CD8-positive, alpha-beta T cell (primary cell): ENCODE measurements at regions of chr7 and their contacts with region 1.

Region 1: GRCh38 chr7:8217200-8218068 is 44.5 kb downstream of the ICA1 start:
- DNase-seq: peak in 3 of 9 experiments; percentile 55 to 81 (median 74)
- ATAC-seq: peak; percentile 58
- H3K4me3 ChIP-seq: no peak overlapping the region
- H3K4me3 Mint-ChIP-seq: no peak overlapping the region
- H3K27ac ChIP-seq: no peak overlapping the region
- H3K27ac Mint-ChIP-seq: no peak overlapping the region
- H3K4me1 ChIP-seq: no peaks in the 10 kb centered on the region
- H3K4me1 Mint-ChIP-seq: peaks cover 3% of the 10 kb centered on the region
- H3K27me3 ChIP-seq: no peaks in the 10 kb centered on the region
- H3K27me3 Mint-ChIP-seq: no peaks in the 10 kb centered on the region
- CTCF ChIP-seq: peak; percentile 79

Region 2: DNA sequence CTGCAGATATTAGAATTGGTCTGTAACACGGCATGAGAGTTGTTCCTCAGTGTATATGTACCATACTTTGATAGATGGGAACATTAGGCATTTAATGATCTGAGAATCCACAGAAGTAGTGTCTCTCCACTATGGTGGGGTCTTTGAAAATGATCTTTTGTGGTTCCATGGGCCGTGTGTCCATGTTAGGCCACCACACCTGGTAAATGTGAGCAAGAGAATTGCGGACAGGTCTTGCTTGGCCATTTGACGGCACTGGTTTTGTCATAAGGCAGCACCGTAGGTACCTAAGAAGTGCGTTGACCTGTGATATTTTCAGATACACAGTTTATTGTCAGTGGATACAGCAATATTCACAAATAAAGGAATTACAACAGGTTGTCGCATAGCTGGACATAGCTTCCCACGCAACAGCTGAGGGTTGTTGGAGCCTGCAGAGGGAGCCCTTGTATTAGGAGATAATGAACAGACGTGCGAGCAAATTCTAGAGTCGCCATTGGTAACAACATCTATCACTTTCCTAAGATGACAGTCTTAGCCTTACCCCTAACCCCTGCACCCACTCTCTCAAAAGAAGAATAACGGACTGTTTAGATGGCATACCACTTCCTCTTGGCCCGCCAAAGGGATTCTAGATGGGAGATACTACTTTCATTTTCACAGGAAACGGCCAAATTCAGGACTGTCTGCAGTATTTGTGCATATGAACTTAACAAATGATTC is 793.1 kb before region 1 on chr7:
- CTCF ChIA-PET with region 1: interaction called, 3 read pairs
- POLR2A ChIA-PET with region 1: no interaction called
- intact Hi-C with region 1: loop called in 1 of 2 experiments (anchors 2 kb)
- DNase-seq: peak; percentile 8 to 67 (median 36)
- ATAC-seq: no peak
- H3K4me3 ChIP-seq: peak overlapping the region; percentile 53 to 71
- H3K4me3 Mint-ChIP-seq: peak overlapping the region; percentile 85
- H3K27ac ChIP-seq: no peak overlapping the region
- H3K27ac Mint-ChIP-seq: peak overlapping the region; percentile 71
- H3K4me1 ChIP-seq: no peaks in the 10 kb centered on the region
- H3K4me1 Mint-ChIP-seq: peaks cover 8% of the 10 kb centered on the region
- H3K27me3 ChIP-seq: no peaks in the 10 kb centered on the region
- H3K27me3 Mint-ChIP-seq: no peaks in the 10 kb centered on the region
- CTCF ChIP-seq: peak; percentile 40

Region 3: DNA sequence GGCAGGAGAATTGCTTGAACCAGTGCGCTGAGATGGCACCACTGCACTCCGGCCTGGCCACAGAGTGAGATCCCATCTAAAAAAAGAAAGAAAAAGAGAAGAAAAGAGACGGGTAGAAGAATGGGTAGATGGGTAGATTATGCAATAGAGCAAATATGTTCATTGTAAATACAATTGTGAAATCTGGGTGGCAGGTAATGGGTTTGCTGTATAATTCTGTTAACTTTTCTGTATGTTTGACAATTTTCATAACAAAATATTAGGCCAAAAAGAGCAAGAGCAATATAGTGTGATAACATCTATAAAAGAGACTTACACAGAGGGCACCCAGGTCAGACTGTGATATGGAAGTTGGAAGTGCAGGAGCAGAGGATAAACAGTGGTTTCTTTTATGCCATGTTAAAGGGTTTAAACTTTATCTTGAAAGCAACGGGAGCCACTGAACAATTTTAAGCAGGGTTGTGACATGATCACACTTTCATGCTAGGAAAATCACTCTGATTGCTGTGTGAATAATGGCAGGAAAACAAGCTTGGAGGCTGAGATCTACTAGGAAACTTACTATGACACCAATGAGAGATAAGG is 675.1 kb before region 1 on chr7:
- CTCF ChIA-PET with region 1: interaction called, 3 read pairs
- POLR2A ChIA-PET with region 1: no interaction called
- intact Hi-C with region 1: loop called (anchors 2 to 5 kb)
- DNase-seq: no peak
- ATAC-seq: no peak
- H3K4me3 ChIP-seq: no peak overlapping the region
- H3K4me3 Mint-ChIP-seq: no peak overlapping the region
- H3K27ac ChIP-seq: no peak overlapping the region
- H3K27ac Mint-ChIP-seq: no peak overlapping the region
- H3K4me1 ChIP-seq: no peaks in the 10 kb centered on the region
- H3K4me1 Mint-ChIP-seq: peaks cover 2% of the 10 kb centered on the region
- H3K27me3 ChIP-seq: no peaks in the 10 kb centered on the region
- H3K27me3 Mint-ChIP-seq: peaks cover 2% of the 10 kb centered on the region
- CTCF ChIP-seq: no peak

Region 4: DNA sequence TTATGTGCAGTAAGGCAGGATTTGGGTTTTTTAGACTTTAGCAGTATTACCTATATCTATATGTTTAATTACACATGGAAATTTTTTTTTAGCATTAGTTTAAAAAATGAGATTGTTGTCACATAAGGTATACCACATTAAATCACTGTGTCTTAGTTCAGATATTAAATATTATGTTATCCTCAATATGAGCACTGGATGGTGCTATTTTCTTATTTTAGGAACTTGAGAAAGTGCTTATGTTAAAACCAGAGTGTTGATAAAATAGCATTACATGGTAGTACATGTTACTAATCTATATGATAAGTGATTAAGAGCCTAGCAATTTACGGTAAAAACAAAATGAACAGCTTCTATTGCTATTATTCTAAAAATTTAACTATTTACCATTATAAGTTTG is 622.0 kb before region 1 on chr7:
- CTCF ChIA-PET with region 1: interaction called, 10 read pairs
- POLR2A ChIA-PET with region 1: no interaction called
- intact Hi-C with region 1: loop called (anchors 1 kb)
- DNase-seq: peak in 2 of 9 experiments; percentile 39 to 57
- ATAC-seq: peak; percentile 52
- H3K4me3 ChIP-seq: no peak overlapping the region
- H3K4me3 Mint-ChIP-seq: no peak overlapping the region
- H3K27ac ChIP-seq: no peak overlapping the region
- H3K27ac Mint-ChIP-seq: no peak overlapping the region
- H3K4me1 ChIP-seq: no peaks in the 10 kb centered on the region
- H3K4me1 Mint-ChIP-seq: peaks cover 2% of the 10 kb centered on the region
- H3K27me3 ChIP-seq: no peaks in the 10 kb centered on the region
- H3K27me3 Mint-ChIP-seq: no peaks in the 10 kb centered on the region
- CTCF ChIP-seq: peak; percentile 69

Region 5: DNA sequence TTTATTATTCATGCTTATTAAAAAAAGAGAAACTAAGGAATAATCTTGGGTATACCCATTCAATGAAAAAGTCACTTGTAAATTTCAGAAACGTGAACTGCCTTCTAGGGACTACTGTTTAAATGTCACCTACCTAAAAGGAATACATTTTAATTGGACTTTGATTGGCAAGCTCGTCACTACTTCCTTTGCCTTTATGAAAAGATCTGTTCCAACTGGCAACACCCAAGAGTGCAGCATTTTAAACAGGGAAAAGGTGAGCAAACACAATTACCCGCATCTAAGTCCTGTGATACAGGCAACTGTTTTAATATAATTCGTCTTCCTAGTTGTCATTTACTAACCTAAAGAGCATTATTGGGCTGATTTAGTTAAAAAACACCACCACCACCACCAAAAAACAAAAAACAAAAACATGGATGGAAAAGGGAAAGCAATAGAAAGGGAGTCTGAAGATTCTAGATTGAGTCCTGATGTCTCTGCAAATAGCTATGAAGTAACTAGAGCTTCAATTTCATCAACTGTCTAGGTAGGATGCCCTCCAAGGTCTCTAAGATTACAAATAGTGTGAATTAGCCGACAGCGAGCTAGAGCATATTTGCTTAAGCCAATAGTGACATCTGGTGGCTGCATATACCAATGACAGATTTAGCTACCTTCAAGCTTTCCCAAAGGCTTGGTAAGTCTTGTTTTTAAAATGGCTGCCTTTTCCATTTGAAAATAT is 78.4 kb after region 1 on chr7:
- CTCF ChIA-PET with region 1: interaction called, 3 read pairs
- POLR2A ChIA-PET with region 1: no interaction called
- intact Hi-C with region 1: loop called in 1 of 2 experiments (anchors 10 kb)
- DNase-seq: peak in 6 of 9 experiments; percentile 7 to 81 (median 22)
- ATAC-seq: peak; percentile 78
- H3K4me3 ChIP-seq: no peak overlapping the region
- H3K4me3 Mint-ChIP-seq: no peak overlapping the region
- H3K27ac ChIP-seq: no peak overlapping the region
- H3K27ac Mint-ChIP-seq: no peak overlapping the region
- H3K4me1 ChIP-seq: no peaks in the 10 kb centered on the region
- H3K4me1 Mint-ChIP-seq: no peaks in the 10 kb centered on the region
- H3K27me3 ChIP-seq: no peaks in the 10 kb centered on the region
- H3K27me3 Mint-ChIP-seq: peaks cover 11% of the 10 kb centered on the region
- CTCF ChIP-seq: peak; percentile 67

Region 6: GRCh38 chr7:8379264-8379663 is 161.8 kb after region 1 on chr7:
- CTCF ChIA-PET with region 1: no interaction called
- POLR2A ChIA-PET with region 1: no interaction called
- intact Hi-C with region 1: no loop called
- DNase-seq: no peak
- ATAC-seq: no peak
- H3K4me3 ChIP-seq: no peak overlapping the region
- H3K4me3 Mint-ChIP-seq: no peak overlapping the region
- H3K27ac ChIP-seq: no peak overlapping the region
- H3K27ac Mint-ChIP-seq: no peak overlapping the region
- H3K4me1 ChIP-seq: no peaks in the 10 kb centered on the region
- H3K4me1 Mint-ChIP-seq: no peaks in the 10 kb centered on the region
- H3K27me3 ChIP-seq: no peaks in the 10 kb centered on the region
- H3K27me3 Mint-ChIP-seq: peaks cover 14% of the 10 kb centered on the region
- CTCF ChIP-seq: no peak